ENCODE measurements at regions of chr14 and their contacts with region 1.

Region 1: GRCh38 chr14:64438181-64438841 is 27.0 kb upstream of the AKAP5 start:
- DNase-seq: no peak
- H3K4me3 ChIP-seq: no peak overlapping the region
- H3K4me3 Mint-ChIP-seq: no peak overlapping the region
- H3K27ac ChIP-seq: no peak overlapping the region
- H3K27ac Mint-ChIP-seq: peak overlapping the region in 1 of 7 donors; percentile 50
- H3K4me1 ChIP-seq: no peaks in the 10 kb centered on the region
- H3K4me1 Mint-ChIP-seq: peaks cover 7 to 14% (median 12%) of the 10 kb centered on the region in 4 donors
- H3K27me3 ChIP-seq: no peaks in the 10 kb centered on the region
- H3K27me3 Mint-ChIP-seq: no peaks in the 10 kb centered on the region

Region 2: GRCh38 chr14:64421166-64421565 is 17.1 kb before region 1 on chr14:
- CTCF ChIA-PET with region 1: interaction called, 55 read pairs
- POLR2A ChIA-PET with region 1: no interaction called
- intact Hi-C with region 1: no loop called
- DNase-seq: no peak
- H3K4me3 ChIP-seq: no peak overlapping the region
- H3K4me3 Mint-ChIP-seq: no peak overlapping the region
- H3K27ac ChIP-seq: no peak overlapping the region
- H3K27ac Mint-ChIP-seq: peak overlapping the region in 1 of 7 donors; percentile 10
- H3K4me1 ChIP-seq: no peaks in the 10 kb centered on the region
- H3K4me1 Mint-ChIP-seq: peaks cover 0 to 4% (median under 1%) of the 10 kb centered on the region in 4 donors
- H3K27me3 ChIP-seq: no peaks in the 10 kb centered on the region
- H3K27me3 Mint-ChIP-seq: no peaks in the 10 kb centered on the region

Measured in CD4-positive, alpha-beta memory T cell (primary cell).